ENCODE measurements at regions of chr5 and their contacts with region 1.

Region 1: DNA sequence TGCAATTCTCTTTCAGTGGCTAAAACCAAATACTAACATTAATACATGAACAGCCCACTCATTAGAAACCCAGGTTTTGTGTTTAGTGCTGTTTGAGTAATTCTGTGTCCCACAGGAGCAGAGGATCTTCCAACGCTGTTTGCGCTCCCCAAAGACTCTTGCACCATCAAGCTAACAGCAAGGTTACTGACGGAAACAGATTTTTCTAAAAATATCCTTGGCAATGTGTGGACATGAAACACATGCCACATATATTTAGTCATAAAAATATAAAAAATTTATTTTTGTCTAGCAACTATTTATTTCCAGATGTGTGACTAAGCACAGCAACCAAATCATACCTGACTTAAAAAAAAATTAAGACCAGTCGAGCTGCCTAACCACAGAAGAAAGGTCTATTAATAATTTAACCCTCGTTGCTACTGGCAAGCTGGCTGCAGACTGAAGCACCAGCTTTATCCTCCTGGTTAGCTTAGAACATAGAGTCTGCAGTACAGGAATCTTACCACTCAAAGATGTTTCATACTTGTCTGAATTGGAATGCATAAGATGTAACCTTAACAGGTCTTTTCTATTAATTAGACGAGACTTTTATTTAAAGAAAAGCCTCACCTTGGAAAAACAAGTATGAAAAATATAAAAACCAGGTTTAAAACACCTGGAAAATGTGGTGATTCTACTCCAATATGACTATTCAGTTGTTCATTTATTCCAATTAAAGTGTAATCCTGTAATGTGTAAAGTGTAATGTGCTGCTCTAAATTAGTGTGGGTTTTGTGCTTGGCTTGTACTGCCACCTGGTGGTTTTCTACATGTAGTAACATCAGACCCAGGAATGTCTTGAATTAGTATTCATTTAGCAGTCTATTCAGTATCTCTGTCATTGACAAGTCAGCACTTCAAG is 272.5 kb downstream of the EPB41L4A start:
- DNase-seq: no peak
- H3K4me3 ChIP-seq: no peak overlapping the region
- H3K27ac ChIP-seq: peak overlapping the region; percentile 36
- H3K4me1 ChIP-seq: peaks cover 39% of the 10 kb centered on the region
- H3K27me3 ChIP-seq: no peaks in the 10 kb centered on the region
- CTCF ChIP-seq: peak; percentile 90

Region 2: DNA sequence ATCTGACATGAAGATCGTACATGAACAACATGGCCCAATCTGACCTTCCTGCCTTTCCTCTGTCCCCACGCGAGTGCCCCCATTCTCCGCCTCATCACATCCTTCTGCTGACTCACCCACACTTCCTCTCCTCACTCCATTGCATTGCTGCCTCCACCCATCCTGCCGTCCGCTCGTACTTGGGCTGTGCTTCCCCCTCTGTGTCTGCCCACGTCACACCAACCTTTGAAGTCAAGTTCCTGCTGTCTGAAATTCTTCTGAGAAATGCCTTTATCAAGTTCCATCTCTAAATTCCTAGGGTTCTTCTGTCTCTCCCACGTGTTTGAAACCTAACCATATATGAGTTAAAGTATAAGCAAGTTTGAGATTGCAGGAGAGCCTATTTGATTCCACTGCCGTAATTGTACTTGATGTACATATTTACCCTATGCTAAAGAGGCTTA is 616.3 kb before region 1 on chr5:
- intact Hi-C with region 1: loop called (anchors 5 kb)
- DNase-seq: peak; percentile 69
- H3K4me3 ChIP-seq: no peak overlapping the region
- H3K27ac ChIP-seq: peak overlapping the region; percentile 66
- H3K4me1 ChIP-seq: peaks cover 5% of the 10 kb centered on the region
- H3K27me3 ChIP-seq: no peaks in the 10 kb centered on the region
- CTCF ChIP-seq: no peak

Region 3: DNA sequence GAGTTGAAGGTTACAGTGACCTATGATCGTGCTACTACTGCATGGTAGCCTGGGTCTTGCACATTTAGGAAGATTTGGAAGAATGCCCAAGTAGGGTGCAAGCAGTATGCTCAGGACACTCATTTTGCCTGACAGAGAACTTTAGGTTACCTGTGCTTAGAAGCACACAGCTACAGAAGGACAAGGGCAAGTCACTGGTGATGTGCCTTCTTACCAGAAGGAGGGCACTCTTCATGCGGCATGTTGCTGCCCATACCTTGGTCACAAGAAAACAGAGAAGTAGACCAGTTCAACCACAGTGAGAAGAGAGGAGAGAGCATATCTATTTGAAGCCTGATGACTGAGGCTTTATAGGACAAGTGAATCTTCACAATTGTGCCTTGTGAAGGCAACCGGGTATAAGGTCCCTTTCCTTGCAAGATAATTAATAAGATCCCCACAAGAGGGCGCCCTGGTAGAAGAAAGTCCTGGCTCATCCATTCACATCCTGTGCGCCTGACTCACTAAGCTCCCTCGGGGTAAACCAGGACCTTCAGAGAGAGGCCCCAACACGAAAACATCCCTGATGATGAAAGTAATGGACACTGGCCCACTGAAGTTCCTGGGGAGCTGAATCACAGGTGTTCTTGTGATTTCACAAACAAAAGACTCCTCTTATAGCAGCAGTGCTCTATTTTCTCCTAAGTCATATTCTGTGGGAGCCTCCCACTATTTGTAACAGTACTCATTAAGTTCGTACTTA is 596.1 kb before region 1 on chr5:
- intact Hi-C with region 1: loop called (anchors 2 kb)
- DNase-seq: peak; percentile 47
- H3K4me3 ChIP-seq: peak overlapping the region; percentile 24
- H3K27ac ChIP-seq: peak overlapping the region; percentile 84
- H3K4me1 ChIP-seq: peaks cover 40% of the 10 kb centered on the region
- H3K27me3 ChIP-seq: no peaks in the 10 kb centered on the region
- CTCF ChIP-seq: peak; percentile 78

Region 4: DNA sequence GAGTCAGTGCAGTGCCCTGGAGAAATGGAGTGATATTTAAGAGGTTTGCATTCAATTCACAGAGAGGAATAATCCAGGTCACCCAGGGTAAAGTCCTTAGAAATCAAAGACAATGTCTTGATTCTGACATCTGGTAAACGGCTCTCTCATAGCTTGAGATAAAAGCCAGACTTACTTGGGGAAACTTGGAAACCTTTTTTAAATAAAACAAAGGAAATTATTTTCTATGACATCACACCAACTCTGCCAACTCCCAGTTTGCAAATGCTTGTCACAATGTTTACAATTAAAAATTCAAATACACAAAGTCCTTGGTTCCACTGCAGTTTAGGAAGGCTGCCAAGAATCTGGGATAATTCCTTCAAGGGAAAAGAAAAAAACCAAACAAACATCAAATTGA is 134.5 kb before region 1 on chr5:
- intact Hi-C with region 1: loop called (anchors 2 kb)
- DNase-seq: no peak
- H3K4me3 ChIP-seq: no peak overlapping the region
- H3K27ac ChIP-seq: peak overlapping the region; percentile 60
- H3K4me1 ChIP-seq: peaks cover 30% of the 10 kb centered on the region
- H3K27me3 ChIP-seq: no peaks in the 10 kb centered on the region
- CTCF ChIP-seq: no peak

Measured in left ventricle myocardium inferior (tissue), 1 donor.